AG04450 (cell line): ENCODE measurements at regions of chr12 and their contacts with region 1.

Region 1: DNA sequence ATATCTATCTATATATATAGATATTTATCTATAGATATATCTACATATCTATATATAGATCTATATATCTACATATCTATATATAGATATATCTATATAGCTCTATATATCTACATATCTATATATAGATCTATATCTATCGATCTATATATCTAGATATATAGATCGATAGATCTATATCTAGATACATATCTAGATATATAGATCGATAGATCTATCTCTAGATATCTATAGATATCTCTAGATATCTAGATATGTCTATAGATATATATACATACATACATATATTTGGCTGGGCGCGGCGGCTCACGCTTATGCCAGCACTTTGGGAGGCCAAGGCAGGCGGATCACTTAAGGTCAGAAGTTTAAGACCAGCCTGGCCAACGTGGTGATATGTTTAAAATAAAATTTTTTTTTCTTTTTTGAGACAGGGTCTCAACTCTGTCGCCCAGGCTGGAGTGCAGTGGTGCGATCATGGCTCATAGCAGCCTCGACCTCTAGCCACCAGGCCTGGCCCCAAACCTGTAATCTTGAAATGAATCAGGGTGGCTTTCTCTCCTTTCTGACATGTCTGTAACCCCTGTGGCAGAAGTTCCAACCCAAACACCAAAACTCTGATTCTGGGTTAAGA is 18.1 kb downstream of the ARPC3 start:
- DNase-seq: no peak
- H3K4me3 ChIP-seq: no peak overlapping the region
- H3K27ac ChIP-seq: no peak overlapping the region
- H3K27me3 ChIP-seq: no peaks in the 10 kb centered on the region
- CTCF ChIP-seq: no peak

Region 2: GRCh38 chr12:110093631-110094311 is 338.3 kb before region 1 on chr12:
- CTCF ChIA-PET with region 1: interaction called, 60 read pairs
- POLR2A ChIA-PET with region 1: interaction called, 5 read pairs
- DNase-seq: no peak
- H3K4me3 ChIP-seq: no peak overlapping the region
- H3K27ac ChIP-seq: no peak overlapping the region
- H3K27me3 ChIP-seq: peaks cover 13% of the 10 kb centered on the region
- CTCF ChIP-seq: no peak

Region 3: DNA sequence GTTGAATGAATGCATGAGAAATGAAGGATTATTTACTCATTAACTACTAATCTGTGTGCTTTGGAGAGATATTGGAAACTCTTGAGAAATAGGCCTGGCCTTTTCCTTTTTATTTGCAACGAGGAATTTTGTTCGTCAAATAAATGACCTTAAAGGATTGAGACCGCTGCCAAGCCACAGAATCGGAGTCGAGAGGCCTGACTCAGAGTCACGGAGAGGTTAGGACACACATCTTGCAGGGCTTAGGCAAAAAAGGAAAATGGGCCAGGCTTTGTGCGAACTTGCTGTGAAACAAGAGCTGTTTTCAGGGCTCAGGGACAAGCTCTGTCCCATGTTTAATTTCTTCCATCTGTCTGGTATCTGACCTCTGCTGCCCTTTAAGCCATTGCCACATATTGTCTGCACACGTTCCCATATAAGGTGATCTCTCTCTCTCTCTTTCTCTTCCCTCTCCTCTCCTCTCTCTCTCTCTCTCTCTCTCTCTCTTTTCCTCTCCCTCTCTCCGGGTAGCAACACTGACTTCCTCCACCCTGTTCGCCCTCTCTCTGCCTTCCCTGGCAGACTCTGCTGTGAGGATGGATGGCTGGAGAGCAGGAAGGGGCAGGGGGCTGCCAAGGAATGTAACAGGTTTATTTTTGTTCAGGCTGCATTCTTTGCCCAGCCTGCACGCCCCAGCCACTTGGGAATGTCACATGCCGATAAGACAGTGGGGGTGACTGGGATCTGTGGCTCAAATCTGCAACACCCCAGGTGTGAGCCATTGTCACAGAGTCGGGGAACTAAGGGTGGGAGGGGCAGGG is 322.8 kb before region 1 on chr12:
- CTCF ChIA-PET with region 1: interaction called, 15 read pairs
- POLR2A ChIA-PET with region 1: no interaction called
- DNase-seq: peak; percentile 97
- H3K4me3 ChIP-seq: peak overlapping the region; percentile 37
- H3K27ac ChIP-seq: peak overlapping the region; percentile 98
- H3K27me3 ChIP-seq: no peaks in the 10 kb centered on the region
- CTCF ChIP-seq: no peak

Region 4: DNA sequence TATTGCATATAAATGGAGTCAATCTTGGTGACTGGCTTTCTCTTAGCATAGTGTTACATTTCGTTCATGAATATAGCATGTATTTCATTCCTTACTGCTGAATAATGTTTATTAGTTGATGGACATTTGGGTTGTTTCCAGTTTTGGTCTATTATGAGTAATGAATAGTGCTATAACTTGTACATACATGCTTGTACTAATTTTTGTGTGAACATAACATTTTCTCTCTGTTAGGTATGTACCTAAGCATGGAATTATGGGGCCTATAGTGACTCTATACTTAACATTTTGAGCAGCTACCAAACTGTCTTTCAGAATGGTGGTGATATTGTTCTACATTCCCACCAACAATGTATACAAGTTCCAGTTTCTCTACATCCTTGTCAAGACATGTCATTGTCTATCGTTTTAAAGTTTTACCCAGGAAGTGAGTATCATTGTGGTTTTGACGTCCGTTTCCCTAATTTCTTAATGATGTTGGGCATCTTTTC is 128.0 kb before region 1 on chr12:
- CTCF ChIA-PET with region 1: no interaction called
- POLR2A ChIA-PET with region 1: no interaction called
- DNase-seq: no peak
- H3K4me3 ChIP-seq: no peak overlapping the region
- H3K27ac ChIP-seq: no peak overlapping the region
- H3K27me3 ChIP-seq: no peaks in the 10 kb centered on the region
- CTCF ChIP-seq: no peak

Region 5: DNA sequence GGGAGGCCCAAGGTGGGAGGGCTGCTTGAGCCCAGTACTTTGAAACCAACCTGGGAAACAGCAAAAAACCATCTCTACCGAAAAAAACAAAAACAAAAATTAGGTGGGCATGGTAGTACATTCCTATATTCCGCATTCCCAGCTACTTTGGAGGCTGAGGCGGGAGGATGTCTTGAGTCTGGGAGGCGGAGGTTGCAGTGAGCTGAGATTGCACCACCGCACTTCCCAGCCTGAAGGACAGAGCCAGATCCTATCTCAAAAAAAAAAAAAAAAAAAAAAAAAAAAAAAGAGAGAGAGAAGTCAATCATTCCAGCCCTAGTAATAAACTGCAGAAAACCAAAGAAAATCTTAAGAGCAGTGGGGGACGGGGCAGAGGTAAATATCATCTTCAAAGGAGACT is 74.5 kb before region 1 on chr12:
- CTCF ChIA-PET with region 1: interaction called, 11 read pairs
- POLR2A ChIA-PET with region 1: no interaction called
- DNase-seq: no peak
- H3K4me3 ChIP-seq: no peak overlapping the region
- H3K27ac ChIP-seq: no peak overlapping the region
- H3K27me3 ChIP-seq: no peaks in the 10 kb centered on the region
- CTCF ChIP-seq: no peak

Region 6: DNA sequence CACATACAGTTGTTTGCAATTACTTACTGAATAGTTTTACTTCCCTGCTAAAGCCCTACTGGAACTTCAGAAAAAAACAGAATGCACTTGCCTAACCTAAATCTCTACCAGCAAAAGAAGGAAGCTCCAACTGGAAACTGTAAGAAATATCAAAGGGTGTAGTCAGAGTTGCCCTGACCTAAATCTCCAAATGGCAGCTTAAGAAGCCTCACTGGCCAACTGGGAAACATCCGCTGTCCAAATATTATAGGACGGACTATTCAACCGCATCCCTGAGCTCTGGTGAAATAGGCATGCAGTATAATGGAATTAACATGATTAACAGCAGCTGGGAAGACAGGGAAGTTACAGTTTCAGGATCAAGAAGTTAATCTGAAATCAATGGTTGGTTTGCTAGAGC is 52.9 kb before region 1 on chr12:
- CTCF ChIA-PET with region 1: interaction called, 14 read pairs
- POLR2A ChIA-PET with region 1: interaction called, 4 read pairs
- DNase-seq: no peak
- H3K4me3 ChIP-seq: no peak overlapping the region
- H3K27ac ChIP-seq: no peak overlapping the region
- H3K27me3 ChIP-seq: no peaks in the 10 kb centered on the region
- CTCF ChIP-seq: no peak

Region 7: DNA sequence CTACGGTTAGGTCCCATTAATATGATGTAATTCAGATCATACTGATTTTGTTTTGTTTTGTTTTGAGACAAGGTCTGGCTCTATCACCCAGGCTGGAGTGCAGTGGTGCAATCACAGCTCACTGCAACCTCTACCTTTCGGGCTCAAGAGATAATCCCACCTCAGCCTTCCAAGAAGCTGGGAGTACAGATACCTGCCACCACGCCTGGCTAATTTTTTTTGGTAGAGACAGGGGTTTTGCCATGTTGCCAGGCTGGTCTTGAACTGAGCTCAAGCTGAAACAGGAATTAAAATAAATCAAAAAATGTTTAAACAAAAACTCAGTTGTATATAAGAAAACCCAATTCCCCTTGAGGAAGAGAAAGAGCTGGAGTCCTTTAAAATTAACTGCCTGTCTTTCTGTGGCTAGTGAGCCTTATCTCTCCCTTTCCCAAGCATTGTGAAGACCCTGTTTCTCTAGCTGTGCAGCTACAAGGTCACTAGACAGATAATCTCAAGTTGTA is 10.9 kb before region 1 on chr12:
- CTCF ChIA-PET with region 1: interaction called, 43 read pairs
- POLR2A ChIA-PET with region 1: no interaction called
- DNase-seq: no peak
- H3K4me3 ChIP-seq: no peak overlapping the region
- H3K27ac ChIP-seq: no peak overlapping the region
- H3K27me3 ChIP-seq: no peaks in the 10 kb centered on the region
- CTCF ChIP-seq: no peak

Region 8: DNA sequence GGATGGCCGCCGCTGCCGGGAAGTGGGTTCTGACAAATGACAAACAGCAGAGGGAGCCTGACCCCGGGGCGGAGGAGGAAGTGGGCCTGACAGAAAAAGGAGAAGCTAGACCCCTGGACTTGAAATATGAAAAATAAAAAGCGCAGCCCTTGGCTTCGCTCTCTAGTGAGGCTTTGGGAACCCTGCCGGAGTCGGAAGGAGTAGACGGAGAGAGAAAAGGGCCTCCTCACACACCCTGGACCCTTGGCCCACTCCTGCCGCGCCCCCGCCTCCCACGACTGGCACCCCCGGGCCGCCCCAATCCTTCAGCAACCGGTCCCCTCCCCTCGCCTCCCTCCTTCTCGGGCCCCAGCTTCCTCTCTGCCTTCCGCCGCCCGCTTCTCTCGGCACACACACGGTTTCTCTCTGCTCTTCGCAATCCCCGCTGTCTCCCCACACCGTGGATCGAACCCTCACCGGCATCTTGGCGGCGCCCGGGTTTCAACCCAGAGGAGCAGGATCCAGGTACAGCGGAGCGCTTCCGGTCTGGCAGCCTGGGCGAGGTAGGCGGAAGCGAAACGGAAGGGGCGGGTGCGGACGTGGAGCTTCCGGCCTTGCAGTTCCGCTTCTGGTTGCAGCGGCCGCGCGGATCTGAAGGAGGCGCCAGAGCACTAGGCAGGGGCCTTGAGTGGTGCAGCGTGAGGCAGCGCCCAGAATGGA is 17.9 kb after region 1 on chr12 and contains the start of gene ARPC3:
- CTCF ChIA-PET with region 1: interaction called, 21 read pairs
- POLR2A ChIA-PET with region 1: interaction called, 6 read pairs
- DNase-seq: peak; percentile 86
- H3K4me3 ChIP-seq: peak within 1 kb of the TSS; percentile 94
- H3K27ac ChIP-seq: peak within 1 kb of the TSS; percentile 91
- H3K27me3 ChIP-seq: no peaks in the 10 kb centered on the region
- CTCF ChIP-seq: peak; percentile 88
- polyA plus RNA-seq, gene ARPC3: 57.0 and 82.3 TPM in 2 replicates